Colonic mucosa (tissue), 4 donors: ENCODE measurements at regions of chr18 and their contacts with region 1.

Region 1: DNA sequence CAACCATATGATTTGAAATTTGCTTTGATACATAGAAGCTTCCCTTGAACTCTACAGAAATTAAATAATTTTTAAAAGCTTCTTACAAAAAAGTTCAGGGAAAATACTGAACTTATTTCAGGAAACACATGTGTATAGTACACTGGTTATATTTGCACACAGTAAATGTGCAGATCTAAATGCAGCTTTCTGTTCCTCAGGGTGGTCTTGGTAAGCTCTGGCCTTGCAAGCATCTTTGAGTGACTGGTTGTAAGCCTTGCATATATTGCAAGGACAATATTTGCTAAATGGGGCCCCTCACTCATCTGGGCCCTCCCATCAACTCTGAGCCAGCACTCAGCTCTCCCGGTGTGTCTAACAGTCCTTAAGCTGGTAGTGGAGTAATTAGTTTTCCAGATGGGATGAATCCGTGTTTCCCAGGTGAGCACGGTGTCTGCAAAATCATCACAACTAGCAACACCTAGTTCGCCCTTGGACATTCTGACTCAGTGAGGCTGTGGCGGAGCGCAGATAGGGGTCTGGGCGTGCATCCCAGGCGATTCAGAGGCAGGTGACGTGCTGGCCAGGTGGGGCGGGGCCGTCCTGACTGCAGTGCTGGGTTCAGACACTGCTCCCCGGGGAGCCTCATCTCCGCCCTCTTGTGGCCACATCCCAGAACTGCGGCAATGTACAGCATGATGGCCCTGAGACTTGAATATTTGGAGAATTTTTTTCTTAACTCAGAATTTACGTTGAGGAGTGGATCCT is 149.6 kb downstream of the MBP start:
- DNase-seq: peak; percentile 96
- H3K4me3 ChIP-seq: no peak overlapping the region
- H3K27ac ChIP-seq: no peak overlapping the region
- H3K4me1 ChIP-seq: peaks cover 3% of the 10 kb centered on the region
- H3K27me3 ChIP-seq: no peaks in the 10 kb centered on the region
- CTCF ChIP-seq: peak; percentile 91

Region 2: GRCh38 chr18:76741365-76741764 is 241.6 kb before region 1 on chr18:
- intact Hi-C with region 1: no loop called
- DNase-seq: no peak
- H3K4me3 ChIP-seq: no peak overlapping the region
- H3K27ac ChIP-seq: no peak overlapping the region
- H3K4me1 ChIP-seq: no peaks in the 10 kb centered on the region
- H3K27me3 ChIP-seq: no peaks in the 10 kb centered on the region
- CTCF ChIP-seq: no peak

Region 3: GRCh38 chr18:76922107-76922506 is 60.9 kb before region 1 on chr18:
- intact Hi-C with region 1: loop called (anchors 2 kb)
- DNase-seq: peak; percentile 59
- H3K4me3 ChIP-seq: no peak overlapping the region
- H3K27ac ChIP-seq: no peak overlapping the region
- H3K4me1 ChIP-seq: no peaks in the 10 kb centered on the region
- H3K27me3 ChIP-seq: no peaks in the 10 kb centered on the region
- CTCF ChIP-seq: peak; percentile 49

Region 4: DNA sequence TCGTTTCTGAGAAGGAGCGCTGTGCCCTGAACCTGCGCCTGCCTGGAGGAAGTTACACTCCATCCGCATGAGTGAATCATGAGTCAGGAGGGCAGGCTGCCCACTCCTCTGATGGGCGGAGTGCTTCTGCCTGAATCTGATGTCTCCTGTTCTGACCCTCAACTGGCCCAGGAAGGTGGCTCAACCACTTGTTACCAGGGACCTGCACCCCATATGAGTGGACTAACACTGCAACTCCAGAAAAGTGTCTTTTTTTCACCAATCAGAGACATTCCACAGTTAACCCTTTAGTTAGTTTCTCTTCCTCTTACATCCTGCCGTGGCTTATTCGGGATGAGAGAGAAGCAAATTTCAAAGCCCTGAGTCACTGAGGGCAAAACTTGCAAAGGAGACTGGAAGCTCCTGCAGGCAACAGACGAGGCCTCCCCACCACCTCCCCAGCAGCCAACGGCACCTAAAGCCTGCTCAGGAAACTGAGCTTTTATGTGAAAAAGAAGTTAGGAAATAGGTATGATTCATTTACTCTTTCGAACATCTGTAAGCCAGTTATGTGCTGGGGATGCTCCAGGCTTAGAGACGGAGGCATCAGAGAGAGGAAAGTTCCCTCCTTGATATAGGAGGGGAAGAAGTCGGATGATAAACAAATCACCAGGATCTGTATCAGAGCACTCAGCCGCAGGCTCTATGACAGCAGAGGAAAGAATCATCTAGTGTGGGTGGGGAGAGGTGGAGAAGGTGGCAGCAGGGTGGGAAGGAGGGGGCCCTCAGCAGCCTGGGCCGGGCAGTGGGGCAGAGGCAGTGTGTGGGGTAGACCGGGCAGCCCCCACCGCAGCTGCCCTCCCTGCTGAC is 118.6 kb after region 1 on chr18:
- intact Hi-C with region 1: no loop called
- DNase-seq: peak; percentile 69
- H3K4me3 ChIP-seq: no peak overlapping the region
- H3K27ac ChIP-seq: peak overlapping the region; percentile 70
- H3K4me1 ChIP-seq: no peaks in the 10 kb centered on the region
- H3K27me3 ChIP-seq: no peaks in the 10 kb centered on the region
- CTCF ChIP-seq: no peak